Naive thymus-derived CD4-positive, alpha-beta T cell (primary cell): ENCODE measurements at regions of chr7 and their contacts with region 1.

Region 1: GRCh38 chr7:36723951-36724664 is at the start of gene AOAH:
- DNase-seq: peak; percentile 44 to 93 (median 86)
- ATAC-seq: peak; percentile 97
- H3K4me3 ChIP-seq: peak within 1 kb of the TSS; percentile 64
- H3K4me3 Mint-ChIP-seq: peak within 1 kb of the TSS; percentile 69 to 98 (median 88)
- H3K27ac ChIP-seq: peak within 1 kb of the TSS; percentile 73
- H3K27ac Mint-ChIP-seq: peak within 1 kb of the TSS; percentile 86 to 99 (median 96)
- H3K4me1 ChIP-seq: peaks cover 45 to 48% of the 10 kb centered on the region in 2 donors
- H3K4me1 Mint-ChIP-seq: peaks cover 53 to 100% (median 89%) of the 10 kb centered on the region in 7 donors
- H3K27me3 ChIP-seq: no peaks in the 10 kb centered on the region
- H3K27me3 Mint-ChIP-seq: no peaks in the 10 kb centered on the region
- total RNA-seq, gene AOAH: 6.3 to 127 (median 22.1) TPM

Region 2: GRCh38 chr7:36448781-36449379 is 275.2 kb before region 1 on chr7:
- CTCF ChIA-PET with region 1: no interaction called
- POLR2A ChIA-PET with region 1: no interaction called
- intact Hi-C with region 1: no loop called
- DNase-seq: no peak
- ATAC-seq: no peak
- H3K4me3 ChIP-seq: no peak overlapping the region
- H3K4me3 Mint-ChIP-seq: no peak overlapping the region
- H3K27ac ChIP-seq: no peak overlapping the region
- H3K27ac Mint-ChIP-seq: no peak overlapping the region
- H3K4me1 ChIP-seq: no peaks in the 10 kb centered on the region
- H3K4me1 Mint-ChIP-seq: peaks cover 0 to 2% (median 0%) of the 10 kb centered on the region in 7 donors
- H3K27me3 ChIP-seq: no peaks in the 10 kb centered on the region
- H3K27me3 Mint-ChIP-seq: no peaks in the 10 kb centered on the region

Region 3: GRCh38 chr7:36736899-36737211 is 12.7 kb after region 1 on chr7:
- CTCF ChIA-PET with region 1: interaction called, 6 read pairs
- POLR2A ChIA-PET with region 1: interaction called, 4 read pairs
- intact Hi-C with region 1: loop called in 1 of 2 experiments (anchors 1 kb)
- DNase-seq: peak in 2 of 9 donors; percentile 11 to 21
- ATAC-seq: peak; percentile 87
- H3K4me3 ChIP-seq: peak overlapping the region; percentile 19
- H3K4me3 Mint-ChIP-seq: peak overlapping the region in 9 of 10 donors; percentile 51 to 74 (median 62)
- H3K27ac ChIP-seq: no peak overlapping the region
- H3K27ac Mint-ChIP-seq: peak overlapping the region; percentile 34 to 98 (median 86)
- H3K4me1 ChIP-seq: peaks cover 13 to 24% of the 10 kb centered on the region in 2 donors
- H3K4me1 Mint-ChIP-seq: peaks cover 19 to 47% (median 34%) of the 10 kb centered on the region in 7 donors
- H3K27me3 ChIP-seq: no peaks in the 10 kb centered on the region
- H3K27me3 Mint-ChIP-seq: no peaks in the 10 kb centered on the region

Region 4: DNA sequence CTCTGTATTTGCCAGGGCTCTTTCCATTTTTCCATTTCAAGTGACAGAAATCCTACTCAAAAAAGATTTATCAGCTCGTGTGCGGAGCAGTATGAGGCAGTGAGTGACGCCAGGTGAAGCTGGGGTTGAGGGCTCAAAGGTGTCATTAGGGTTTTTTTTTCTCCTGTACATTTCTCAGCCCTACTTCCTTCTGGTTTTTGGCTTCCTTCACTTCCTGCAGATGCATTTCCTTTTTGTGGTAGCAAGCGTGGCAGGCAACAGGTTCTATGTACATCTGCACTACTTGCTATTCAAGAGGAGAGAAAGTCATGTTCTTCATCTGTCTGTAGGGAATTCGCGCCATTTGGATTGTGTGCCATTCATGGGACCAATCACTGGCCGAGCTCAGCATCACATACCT is 53.0 kb after region 1 on chr7:
- CTCF ChIA-PET with region 1: no interaction called
- POLR2A ChIA-PET with region 1: interaction called, 10 read pairs
- intact Hi-C with region 1: loop called (anchors 1 kb)
- DNase-seq: peak; percentile 11 to 90 (median 85)
- ATAC-seq: peak; percentile 78
- H3K4me3 ChIP-seq: peak overlapping the region; percentile 41
- H3K4me3 Mint-ChIP-seq: peak overlapping the region; percentile 76 to 92 (median 84)
- H3K27ac ChIP-seq: peak overlapping the region; percentile 75
- H3K27ac Mint-ChIP-seq: peak overlapping the region; percentile 78 to 99 (median 95)
- H3K4me1 ChIP-seq: peaks cover 68 to 69% of the 10 kb centered on the region in 2 donors
- H3K4me1 Mint-ChIP-seq: peaks cover 65 to 90% (median 85%) of the 10 kb centered on the region in 7 donors
- H3K27me3 ChIP-seq: no peaks in the 10 kb centered on the region
- H3K27me3 Mint-ChIP-seq: no peaks in the 10 kb centered on the region

Region 5: DNA sequence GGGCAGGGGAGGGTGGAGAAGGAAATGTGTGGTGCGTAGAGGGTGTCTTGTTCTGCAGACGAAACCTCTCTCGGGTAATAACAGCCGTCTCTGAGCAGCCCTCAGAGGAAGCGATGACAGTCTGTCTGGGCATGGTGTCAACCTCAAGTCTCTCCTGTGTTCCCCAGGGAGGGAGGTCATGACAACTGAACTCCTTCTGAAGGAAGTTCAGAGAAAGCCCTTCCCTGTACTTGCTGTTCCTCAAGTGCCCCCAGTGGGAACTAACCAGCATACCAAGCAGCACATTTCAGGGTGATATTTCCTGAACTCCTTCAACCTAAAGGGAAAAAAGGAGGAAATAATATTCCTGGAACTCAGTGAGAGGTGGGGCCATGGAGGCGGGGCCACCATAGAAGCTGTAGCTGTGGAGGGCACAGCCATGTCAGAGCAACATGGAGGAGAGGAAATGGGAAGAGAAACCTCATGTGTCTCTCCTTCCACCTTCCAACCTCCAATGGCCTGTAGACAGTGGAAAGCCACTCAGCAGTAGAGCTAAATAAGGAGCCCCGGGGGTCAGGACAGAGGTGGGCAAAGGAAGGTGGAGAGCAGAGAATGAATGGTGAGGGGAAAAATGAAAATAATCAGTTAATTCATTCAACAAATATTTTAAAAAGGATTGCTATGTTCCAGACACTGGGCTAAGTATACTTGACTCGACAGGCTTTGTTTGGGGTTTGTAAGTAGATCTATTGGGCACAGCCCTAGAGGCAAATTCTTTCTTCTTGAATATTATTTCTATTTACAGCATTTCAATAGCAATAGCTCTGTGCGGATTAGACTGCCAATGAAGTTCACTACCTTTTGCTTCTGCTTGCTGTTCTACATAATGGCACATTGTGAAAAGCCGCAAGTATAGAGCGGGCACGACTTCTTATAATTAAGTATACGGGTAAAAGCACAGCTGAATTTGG is 61.2 kb after region 1 on chr7:
- CTCF ChIA-PET with region 1: no interaction called
- POLR2A ChIA-PET with region 1: interaction called, 9 read pairs
- intact Hi-C with region 1: loop called in 1 of 2 experiments (anchors 2 kb)
- DNase-seq: peak; percentile 23 to 87 (median 84)
- ATAC-seq: peak; percentile 89
- H3K4me3 ChIP-seq: no peak overlapping the region
- H3K4me3 Mint-ChIP-seq: peak overlapping the region; percentile 35 to 85 (median 69)
- H3K27ac ChIP-seq: peak overlapping the region; percentile 78
- H3K27ac Mint-ChIP-seq: peak overlapping the region; percentile 92 to 99 (median 97)
- H3K4me1 ChIP-seq: peaks cover 59 to 87% of the 10 kb centered on the region in 2 donors
- H3K4me1 Mint-ChIP-seq: peaks cover 61 to 95% (median 83%) of the 10 kb centered on the region in 7 donors
- H3K27me3 ChIP-seq: no peaks in the 10 kb centered on the region
- H3K27me3 Mint-ChIP-seq: no peaks in the 10 kb centered on the region

Region 6: DNA sequence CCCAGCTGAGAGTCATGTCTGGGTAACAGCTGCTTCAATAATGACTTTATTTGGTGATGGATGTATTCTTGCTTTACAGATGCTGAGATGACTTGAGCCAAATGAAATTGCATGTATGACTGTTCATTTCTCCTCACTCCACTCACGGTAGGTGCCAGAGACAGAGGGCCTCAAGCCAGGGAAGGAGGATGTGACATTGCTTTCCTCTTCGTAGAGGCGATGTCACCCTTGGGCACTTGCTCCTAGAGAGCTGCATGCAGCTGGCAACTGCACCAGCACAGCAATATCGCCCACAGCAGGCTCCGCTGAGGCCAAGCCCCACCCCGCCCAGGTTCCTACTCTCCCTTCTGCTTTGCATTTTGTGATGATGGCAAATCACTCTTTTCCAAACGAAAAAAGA is 116.8 kb after region 1 on chr7:
- CTCF ChIA-PET with region 1: no interaction called
- POLR2A ChIA-PET with region 1: no interaction called
- intact Hi-C with region 1: loop called in 1 of 2 experiments (anchors 5 kb)
- DNase-seq: no peak
- ATAC-seq: no peak
- H3K4me3 ChIP-seq: no peak overlapping the region
- H3K4me3 Mint-ChIP-seq: no peak overlapping the region
- H3K27ac ChIP-seq: no peak overlapping the region
- H3K27ac Mint-ChIP-seq: peak overlapping the region in 1 of 9 donors; percentile 72
- H3K4me1 ChIP-seq: no peaks in the 10 kb centered on the region
- H3K4me1 Mint-ChIP-seq: peaks cover 0 to 1% (median 0%) of the 10 kb centered on the region in 7 donors
- H3K27me3 ChIP-seq: no peaks in the 10 kb centered on the region
- H3K27me3 Mint-ChIP-seq: peaks cover 0 to 2% (median 0%) of the 10 kb centered on the region in 5 donors

Region 7: DNA sequence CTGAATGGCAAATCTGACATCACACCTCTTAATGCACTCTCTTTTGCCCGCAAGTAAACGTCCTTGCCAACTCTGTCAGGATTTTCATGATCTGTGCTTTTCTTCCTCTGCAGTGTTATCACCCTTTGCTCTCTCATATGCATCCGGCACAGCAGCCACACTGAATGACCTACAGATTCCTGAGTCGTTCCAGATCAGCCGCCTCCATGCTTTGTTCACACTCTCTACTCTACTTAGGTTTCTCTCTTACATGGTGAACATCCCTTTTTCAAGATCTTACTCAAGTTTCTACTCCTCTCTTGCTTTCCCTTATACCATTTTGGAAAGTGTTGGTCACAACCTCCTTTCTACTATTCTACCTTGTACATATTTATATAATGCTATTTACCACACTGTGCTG is 127.9 kb after region 1 on chr7:
- CTCF ChIA-PET with region 1: no interaction called
- POLR2A ChIA-PET with region 1: no interaction called
- intact Hi-C with region 1: no loop called
- DNase-seq: no peak
- ATAC-seq: no peak
- H3K4me3 ChIP-seq: no peak overlapping the region
- H3K4me3 Mint-ChIP-seq: peak overlapping the region in 1 of 10 donors; percentile 0
- H3K27ac ChIP-seq: no peak overlapping the region
- H3K27ac Mint-ChIP-seq: peak overlapping the region in 8 of 9 donors; percentile 4 to 88 (median 35)
- H3K4me1 ChIP-seq: peaks cover 0 to 12% of the 10 kb centered on the region in 2 donors
- H3K4me1 Mint-ChIP-seq: peaks cover 7 to 17% (median 13%) of the 10 kb centered on the region in 7 donors
- H3K27me3 ChIP-seq: no peaks in the 10 kb centered on the region
- H3K27me3 Mint-ChIP-seq: no peaks in the 10 kb centered on the region

Region 8: DNA sequence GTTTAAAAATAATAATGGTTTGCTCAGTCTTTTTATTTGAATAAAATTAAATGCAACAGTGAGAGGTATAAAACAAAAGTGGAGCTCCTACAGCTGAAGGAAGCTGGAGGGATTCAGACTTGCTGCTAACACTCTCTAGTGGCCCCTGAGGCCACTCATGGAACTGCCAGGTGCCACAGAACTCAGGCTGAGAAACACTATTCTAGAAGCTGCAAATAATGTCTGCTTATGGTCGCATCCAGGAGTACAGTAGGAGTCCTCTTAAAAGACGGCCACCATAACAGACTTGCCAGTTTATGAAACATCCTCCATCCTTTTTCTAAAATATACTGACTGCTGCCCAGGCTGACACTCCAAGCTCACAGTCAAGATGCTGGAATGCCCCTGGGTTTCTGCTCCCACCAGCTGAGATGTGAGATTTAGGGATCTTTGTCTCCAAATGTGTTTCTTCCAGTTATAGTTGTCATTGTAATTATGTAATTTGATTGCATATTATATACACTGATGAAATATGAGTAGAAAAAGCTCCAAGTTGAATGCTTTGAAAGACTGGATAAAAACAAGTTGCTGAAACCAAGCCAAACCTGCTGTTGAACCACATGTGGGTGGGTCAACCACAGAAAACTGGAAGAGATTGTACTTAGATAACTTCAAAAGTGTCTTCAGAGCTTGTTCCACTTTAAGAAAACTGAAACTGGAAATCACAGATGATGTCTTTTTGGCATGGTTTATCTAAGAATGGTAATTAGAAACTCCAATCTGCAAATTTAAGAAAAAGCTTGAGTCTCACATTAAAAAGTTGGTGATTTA is 213.9 kb after region 1 on chr7:
- CTCF ChIA-PET with region 1: no interaction called
- POLR2A ChIA-PET with region 1: no interaction called
- intact Hi-C with region 1: loop called in 1 of 2 experiments (anchors 1 kb)
- DNase-seq: peak in 8 of 9 donors; percentile 31 to 78 (median 62)
- ATAC-seq: peak; percentile 29
- H3K4me3 ChIP-seq: peak overlapping the region; percentile 10
- H3K4me3 Mint-ChIP-seq: peak overlapping the region in 8 of 10 donors; percentile 8 to 68 (median 50)
- H3K27ac ChIP-seq: no peak overlapping the region
- H3K27ac Mint-ChIP-seq: peak overlapping the region in 8 of 9 donors; percentile 57 to 95 (median 90)
- H3K4me1 ChIP-seq: peaks cover 0 to 5% of the 10 kb centered on the region in 2 donors
- H3K4me1 Mint-ChIP-seq: peaks cover 11 to 70% (median 63%) of the 10 kb centered on the region in 7 donors
- H3K27me3 ChIP-seq: no peaks in the 10 kb centered on the region
- H3K27me3 Mint-ChIP-seq: no peaks in the 10 kb centered on the region

Region 9: DNA sequence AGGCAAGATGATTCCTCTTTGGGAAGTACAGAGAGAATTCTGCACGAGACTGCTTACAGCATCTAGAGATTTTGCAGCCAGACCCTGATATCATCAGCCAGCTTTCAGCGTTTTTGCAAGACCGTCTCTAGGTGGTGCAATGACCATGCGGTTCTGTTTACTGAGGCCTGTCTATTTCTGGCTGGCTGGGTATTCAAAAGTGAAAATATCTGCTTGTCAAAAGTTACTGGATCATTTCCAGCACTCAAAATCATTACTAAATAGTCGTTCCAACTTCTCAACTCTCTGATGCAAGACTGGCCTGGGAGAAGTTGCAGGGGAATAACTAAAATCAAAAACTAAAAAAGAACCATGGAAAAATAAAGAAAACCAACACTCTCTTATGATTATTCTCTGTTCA is 484.4 kb after region 1 on chr7:
- CTCF ChIA-PET with region 1: no interaction called
- POLR2A ChIA-PET with region 1: no interaction called
- intact Hi-C with region 1: no loop called
- DNase-seq: peak in 7 of 9 donors; percentile 17 to 56 (median 33)
- ATAC-seq: peak; percentile 77
- H3K4me3 ChIP-seq: no peak overlapping the region
- H3K4me3 Mint-ChIP-seq: no peak overlapping the region
- H3K27ac ChIP-seq: no peak overlapping the region
- H3K27ac Mint-ChIP-seq: peak overlapping the region; percentile 25 to 89 (median 71)
- H3K4me1 ChIP-seq: no peaks in the 10 kb centered on the region
- H3K4me1 Mint-ChIP-seq: peaks cover 0 to 17% (median 8%) of the 10 kb centered on the region in 7 donors
- H3K27me3 ChIP-seq: no peaks in the 10 kb centered on the region
- H3K27me3 Mint-ChIP-seq: no peaks in the 10 kb centered on the region

Region 10: DNA sequence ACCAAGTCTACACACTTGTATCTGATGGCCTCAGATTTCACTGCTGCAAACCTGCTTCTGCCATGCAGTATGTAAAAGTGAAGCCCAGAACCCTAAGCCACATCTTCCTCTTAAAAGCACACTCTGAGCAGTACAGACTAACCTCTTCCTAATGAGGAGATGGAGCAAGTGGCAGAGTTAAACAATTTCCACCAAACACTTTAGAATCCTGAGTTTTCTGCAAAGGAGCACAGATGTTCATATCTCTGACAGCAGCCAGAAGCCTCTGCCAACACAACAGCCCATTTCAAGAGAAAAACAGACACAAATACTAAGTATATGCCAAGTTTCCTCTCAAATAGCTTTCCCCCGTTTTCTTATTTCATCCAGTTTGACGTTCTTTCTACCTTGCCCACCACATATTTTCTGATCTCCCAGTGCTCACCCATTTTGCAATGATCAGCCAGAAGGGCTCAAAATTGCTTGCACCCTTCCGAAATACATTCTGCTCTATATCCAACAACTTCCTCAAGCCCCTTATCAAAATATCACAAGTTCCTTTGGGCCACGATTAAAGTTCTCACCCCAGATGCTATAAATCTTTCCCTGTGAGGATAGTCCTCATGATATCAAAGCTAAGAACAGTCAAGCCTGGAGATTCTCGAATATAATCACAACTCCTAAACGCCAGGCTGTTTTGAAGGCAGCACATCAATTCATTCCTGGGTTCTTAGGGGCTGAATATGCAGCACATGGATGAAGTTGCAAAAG is 697.0 kb after region 1 on chr7:
- CTCF ChIA-PET with region 1: no interaction called
- POLR2A ChIA-PET with region 1: no interaction called
- intact Hi-C with region 1: no loop called
- DNase-seq: no peak
- ATAC-seq: no peak
- H3K4me3 ChIP-seq: no peak overlapping the region
- H3K4me3 Mint-ChIP-seq: peak overlapping the region in 2 of 10 donors; percentile 2 to 4
- H3K27ac ChIP-seq: no peak overlapping the region
- H3K27ac Mint-ChIP-seq: peak overlapping the region in 7 of 9 donors; percentile 4 to 64 (median 19)
- H3K4me1 ChIP-seq: peaks cover 0 to 12% of the 10 kb centered on the region in 2 donors
- H3K4me1 Mint-ChIP-seq: peaks cover 31 to 68% (median 61%) of the 10 kb centered on the region in 7 donors
- H3K27me3 ChIP-seq: no peaks in the 10 kb centered on the region
- H3K27me3 Mint-ChIP-seq: no peaks in the 10 kb centered on the region